ENCODE measurements at regions of chr6 and their contacts with region 1.

Region 1: DNA sequence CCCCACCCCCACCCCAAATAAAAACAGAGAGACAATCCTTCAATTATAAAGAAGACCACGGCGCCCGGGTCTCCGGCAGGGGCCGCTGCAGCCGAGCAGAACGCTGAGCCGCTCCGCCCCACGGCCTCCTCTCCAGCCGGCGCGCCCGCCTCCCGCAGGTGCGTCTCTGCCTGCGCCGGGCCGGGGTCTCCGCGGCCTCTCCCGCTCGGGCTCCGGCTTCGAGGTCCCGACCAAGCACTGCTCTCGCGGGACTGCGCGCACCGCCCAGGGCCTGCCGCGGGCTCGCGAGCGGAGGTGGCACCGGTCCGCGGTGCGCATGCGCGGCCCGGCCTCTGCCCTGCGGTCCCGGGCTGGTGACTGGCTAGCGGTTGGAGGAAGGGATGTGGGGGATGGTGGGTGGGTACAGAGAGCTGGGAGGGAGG is 241 bp upstream of the SIRT5 start:
- DNase-seq: peak; percentile 99
- ATAC-seq: peak; percentile 89
- H3K4me3 ChIP-seq: peak overlapping the region in 4 of 5 experiments; percentile 80 to 99 (median 84)
- H3K4me3 Mint-ChIP-seq: peak overlapping the region; percentile 95
- H3K27ac ChIP-seq: peak overlapping the region; percentile 87 to 94
- H3K27ac Mint-ChIP-seq: peak overlapping the region; percentile 98
- H3K4me1 ChIP-seq: peaks cover 15 to 16% of the 10 kb centered on the region in 2 donors
- H3K4me1 Mint-ChIP-seq: peaks cover 27% of the 10 kb centered on the region
- H3K27me3 ChIP-seq: no peaks in the 10 kb centered on the region
- H3K27me3 Mint-ChIP-seq: no peaks in the 10 kb centered on the region
- CTCF ChIP-seq: peak; percentile 48

Region 2: DNA sequence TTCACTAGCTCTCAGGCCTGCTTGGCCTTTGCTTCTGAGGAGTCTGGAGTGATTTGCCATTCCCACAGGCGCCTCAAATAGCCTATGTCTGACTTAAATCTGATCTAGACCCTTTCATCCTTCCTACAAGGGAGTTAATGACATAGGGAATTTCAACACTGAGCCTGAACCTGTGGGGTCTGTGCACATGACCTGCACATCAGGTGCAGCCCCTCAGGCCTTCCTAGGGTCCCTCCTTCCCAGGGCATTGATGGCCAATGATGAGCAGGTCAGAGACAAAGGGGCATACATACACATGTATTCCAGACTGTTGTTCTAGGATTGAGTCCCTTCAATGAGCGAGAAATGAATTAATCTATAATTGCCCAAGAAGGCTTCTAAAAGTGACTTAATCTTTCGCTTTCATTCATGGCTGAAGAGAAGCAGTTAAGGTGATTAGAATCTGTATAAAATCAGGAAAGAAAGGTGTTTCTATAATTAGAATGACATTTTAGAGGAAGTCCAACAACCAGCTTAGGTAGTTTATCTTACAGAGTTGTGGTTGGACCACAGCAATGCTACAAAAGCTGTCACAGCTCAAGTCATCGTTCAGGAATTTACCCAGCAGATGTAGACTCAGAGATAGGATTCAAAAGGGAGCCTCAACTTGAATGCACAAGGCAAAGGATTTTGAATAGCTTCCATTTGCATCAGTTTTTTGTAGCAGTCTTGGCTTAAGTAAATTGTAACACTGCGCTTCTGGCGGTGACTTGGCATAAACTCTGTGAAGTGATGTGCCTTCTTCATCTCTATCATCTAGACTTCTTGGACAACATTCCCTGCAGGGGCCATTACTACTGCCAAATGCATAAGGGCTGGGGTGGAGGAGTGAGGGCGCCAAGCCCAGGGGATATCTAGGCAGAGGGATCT is 218.9 kb before region 1 on chr6:
- CTCF ChIA-PET with region 1: interaction called, 24 read pairs
- POLR2A ChIA-PET with region 1: interaction called, 3 read pairs
- intact Hi-C with region 1: loop called (anchors 1 kb)
- DNase-seq: peak; percentile 73
- ATAC-seq: peak; percentile 34
- H3K4me3 ChIP-seq: peak overlapping the region; percentile 30 to 69 (median 37)
- H3K4me3 Mint-ChIP-seq: peak overlapping the region; percentile 80
- H3K27ac ChIP-seq: peak overlapping the region; percentile 91 to 99
- H3K27ac Mint-ChIP-seq: peak overlapping the region; percentile 92
- H3K4me1 ChIP-seq: peaks cover 59 to 74% of the 10 kb centered on the region in 2 donors
- H3K4me1 Mint-ChIP-seq: peaks cover 72% of the 10 kb centered on the region
- H3K27me3 ChIP-seq: no peaks in the 10 kb centered on the region
- H3K27me3 Mint-ChIP-seq: no peaks in the 10 kb centered on the region
- CTCF ChIP-seq: no peak

Region 3: GRCh38 chr6:13463941-13464340 is 110.2 kb before region 1 on chr6:
- CTCF ChIA-PET with region 1: no interaction called
- POLR2A ChIA-PET with region 1: interaction called, 10 read pairs
- intact Hi-C with region 1: no loop called
- DNase-seq: no peak
- ATAC-seq: no peak
- H3K4me3 ChIP-seq: no peak overlapping the region
- H3K4me3 Mint-ChIP-seq: no peak overlapping the region
- H3K27ac ChIP-seq: no peak overlapping the region
- H3K27ac Mint-ChIP-seq: no peak overlapping the region
- H3K4me1 ChIP-seq: peaks cover 32 to 52% of the 10 kb centered on the region in 2 donors
- H3K4me1 Mint-ChIP-seq: peaks cover 65% of the 10 kb centered on the region
- H3K27me3 ChIP-seq: no peaks in the 10 kb centered on the region
- H3K27me3 Mint-ChIP-seq: no peaks in the 10 kb centered on the region
- CTCF ChIP-seq: no peak

Region 4: DNA sequence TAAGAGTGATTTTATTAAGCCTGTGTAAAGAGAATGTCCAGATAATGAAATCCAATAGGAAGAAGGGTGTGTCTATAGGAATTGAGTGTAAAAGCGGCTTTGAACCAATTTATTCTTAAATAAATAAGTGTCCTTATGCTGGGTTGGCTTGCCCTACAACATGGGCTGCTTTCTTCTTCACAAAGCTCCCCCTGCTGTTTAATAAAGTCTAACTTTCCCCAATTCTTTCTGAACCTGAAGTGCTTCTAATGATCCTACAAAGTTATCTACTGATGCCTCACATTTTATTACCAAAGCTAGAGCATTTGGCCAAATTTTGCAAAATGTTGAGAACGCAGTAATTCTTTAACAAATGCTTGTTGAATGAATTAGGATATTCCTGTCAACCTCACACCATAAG is 36.1 kb before region 1 on chr6:
- CTCF ChIA-PET with region 1: interaction called, 7 read pairs
- POLR2A ChIA-PET with region 1: interaction called, 3 read pairs
- intact Hi-C with region 1: loop called (anchors 2 kb)
- DNase-seq: peak; percentile 64
- ATAC-seq: peak; percentile 56
- H3K4me3 ChIP-seq: no peak overlapping the region
- H3K4me3 Mint-ChIP-seq: no peak overlapping the region
- H3K27ac ChIP-seq: no peak overlapping the region
- H3K27ac Mint-ChIP-seq: no peak overlapping the region
- H3K4me1 ChIP-seq: peaks cover 6 to 8% of the 10 kb centered on the region in 2 donors
- H3K4me1 Mint-ChIP-seq: peaks cover 17% of the 10 kb centered on the region
- H3K27me3 ChIP-seq: no peaks in the 10 kb centered on the region
- H3K27me3 Mint-ChIP-seq: no peaks in the 10 kb centered on the region
- CTCF ChIP-seq: peak; percentile 54

Region 5: GRCh38 chr6:13614926-13615798 is 41.0 kb after region 1 on chr6 and contains the start of gene NOL7:
- CTCF ChIA-PET with region 1: interaction called, 53 read pairs
- POLR2A ChIA-PET with region 1: interaction called, 31 read pairs
- intact Hi-C with region 1: loop called (anchors 1 kb)
- DNase-seq: peak; percentile 99
- ATAC-seq: peak; percentile 93
- H3K4me3 ChIP-seq: peak within 1 kb of the TSS; percentile 79 to 94 (median 93)
- H3K4me3 Mint-ChIP-seq: peak within 1 kb of the TSS; percentile 97
- H3K27ac ChIP-seq: peak within 1 kb of the TSS; percentile 73 to 82
- H3K27ac Mint-ChIP-seq: peak within 1 kb of the TSS; percentile 97
- H3K4me1 ChIP-seq: peaks cover 16 to 22% of the 10 kb centered on the region in 2 donors
- H3K4me1 Mint-ChIP-seq: peaks cover 46% of the 10 kb centered on the region
- H3K27me3 ChIP-seq: no peaks in the 10 kb centered on the region
- H3K27me3 Mint-ChIP-seq: no peaks in the 10 kb centered on the region
- CTCF ChIP-seq: peak; percentile 86
- total RNA-seq, gene NOL7: 48.6 and 58.3 TPM in 2 replicates

Region 6: GRCh38 chr6:13814176-13814937 is 240.2 kb after region 1 on chr6 and contains the start of gene MCUR1:
- CTCF ChIA-PET with region 1: no interaction called
- POLR2A ChIA-PET with region 1: no interaction called
- intact Hi-C with region 1: loop called (anchors 1 kb)
- DNase-seq: peak; percentile 94
- ATAC-seq: peak; percentile 82
- H3K4me3 ChIP-seq: peak within 1 kb of the TSS; percentile 63 to 88 (median 77)
- H3K4me3 Mint-ChIP-seq: peak within 1 kb of the TSS; percentile 94
- H3K27ac ChIP-seq: peak within 1 kb of the TSS; percentile 68 to 89
- H3K27ac Mint-ChIP-seq: peak within 1 kb of the TSS; percentile 89
- H3K4me1 ChIP-seq: peaks cover 17 to 20% of the 10 kb centered on the region in 2 donors
- H3K4me1 Mint-ChIP-seq: peaks cover 31% of the 10 kb centered on the region
- H3K27me3 ChIP-seq: no peaks in the 10 kb centered on the region
- H3K27me3 Mint-ChIP-seq: no peaks in the 10 kb centered on the region
- CTCF ChIP-seq: peak; percentile 14
- total RNA-seq, gene MCUR1: 10.6 and 11.2 TPM in 2 replicates

Region 7: DNA sequence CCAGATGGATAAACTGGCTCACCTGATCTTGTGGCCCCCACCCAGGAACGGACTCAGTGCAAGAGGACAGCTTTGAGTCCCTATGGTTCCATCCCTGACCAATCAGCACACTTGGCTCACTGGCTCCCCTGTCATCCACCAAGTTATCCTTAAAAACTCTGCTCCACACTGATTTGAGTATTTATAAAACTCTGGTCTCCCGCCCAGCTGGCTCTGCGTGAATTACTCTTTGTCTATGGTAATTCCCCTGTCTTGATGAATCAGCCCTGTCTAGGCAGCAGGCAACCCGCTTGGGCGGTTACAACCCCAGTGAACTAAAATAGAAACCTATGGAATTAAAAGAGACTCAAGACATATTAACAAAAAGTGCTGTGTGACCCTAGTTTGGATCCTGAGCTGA is 505.3 kb after region 1 on chr6:
- CTCF ChIA-PET with region 1: no interaction called
- POLR2A ChIA-PET with region 1: no interaction called
- intact Hi-C with region 1: no loop called
- DNase-seq: no peak
- ATAC-seq: no peak
- H3K4me3 ChIP-seq: no peak overlapping the region
- H3K4me3 Mint-ChIP-seq: no peak overlapping the region
- H3K27ac ChIP-seq: no peak overlapping the region
- H3K27ac Mint-ChIP-seq: peak overlapping the region; percentile 26
- H3K4me1 ChIP-seq: peaks cover 30 to 32% of the 10 kb centered on the region in 2 donors
- H3K4me1 Mint-ChIP-seq: peaks cover 66% of the 10 kb centered on the region
- H3K27me3 ChIP-seq: no peaks in the 10 kb centered on the region
- H3K27me3 Mint-ChIP-seq: no peaks in the 10 kb centered on the region
- CTCF ChIP-seq: no peak